A549 (cell line): ENCODE measurements at regions of chr2 and their contacts with region 1.

Region 1: GRCh38 chr2:133844214-133844892 is 276.1 kb upstream of the NCKAP5 start:
- DNase-seq: peak; percentile 62 to 64
- ATAC-seq: peak; percentile 85 to 93
- H3K4me3 ChIP-seq: no peak overlapping the region
- H3K27ac ChIP-seq: peak overlapping the region; percentile 36 to 78; a peak in 5 of 6 replicates
- H3K4me1 ChIP-seq: peaks cover 18% of the 10 kb centered on the region; the same call in 1 of the 3 replicates
- CTCF ChIP-seq: peak; percentile 90
- EP300 ChIP-seq: no peak
- POLR2A ChIP-seq: no peak
- RAD21 ChIP-seq: peak; percentile 95 to 98

Region 2: GRCh38 chr2:133171393-133172004 is 672.9 kb before region 1 on chr2:
- CTCF ChIA-PET with region 1: interaction called, 10 read pairs
- POLR2A ChIA-PET with region 1: no interaction called
- DNase-seq: peak; percentile 9 to 66
- ATAC-seq: peak; percentile 73 to 83
- H3K4me3 ChIP-seq: no peak overlapping the region
- H3K27ac ChIP-seq: no peak overlapping the region
- H3K4me1 ChIP-seq: peaks cover 17% of the 10 kb centered on the region
- CTCF ChIP-seq: peak; percentile 83
- EP300 ChIP-seq: no peak
- POLR2A ChIP-seq: no peak
- RAD21 ChIP-seq: peak; percentile 83 to 88

Region 3: GRCh38 chr2:133561045-133561852 is 283.1 kb before region 1 on chr2:
- CTCF ChIA-PET with region 1: interaction called, 20 read pairs
- POLR2A ChIA-PET with region 1: no interaction called
- DNase-seq: peak in 1 of 2 experiments; percentile 70
- ATAC-seq: peak; percentile 68 to 80; a peak in 3 of 6 replicates
- H3K4me3 ChIP-seq: no peak overlapping the region
- H3K27ac ChIP-seq: peak overlapping the region; percentile 27 to 78; a peak in 5 of 6 replicates
- H3K4me1 ChIP-seq: peaks cover 8% of the 10 kb centered on the region; the same call in 2 of the 3 replicates
- CTCF ChIP-seq: peak; percentile 81
- EP300 ChIP-seq: no peak
- POLR2A ChIP-seq: no peak
- RAD21 ChIP-seq: peak; percentile 82 to 93

Region 4: GRCh38 chr2:133765658-133766057 is 78.7 kb before region 1 on chr2:
- CTCF ChIA-PET with region 1: interaction called, 10 read pairs
- POLR2A ChIA-PET with region 1: no interaction called
- DNase-seq: peak in 1 of 2 experiments; percentile 58
- ATAC-seq: peak; percentile 68 to 82; a peak in 5 of 6 replicates
- H3K4me3 ChIP-seq: no peak overlapping the region
- H3K27ac ChIP-seq: peak overlapping the region; percentile 30 to 40; a peak in 3 of 6 replicates
- H3K4me1 ChIP-seq: peaks cover 12% of the 10 kb centered on the region
- CTCF ChIP-seq: no peak
- EP300 ChIP-seq: peak; percentile 21 to 28; a peak in 1 of 5 replicates
- POLR2A ChIP-seq: no peak
- RAD21 ChIP-seq: no peak

Region 5: GRCh38 chr2:133822517-133823225 is 21.7 kb before region 1 on chr2:
- CTCF ChIA-PET with region 1: interaction called, 13 read pairs
- POLR2A ChIA-PET with region 1: no interaction called
- DNase-seq: no peak
- ATAC-seq: no peak
- H3K4me3 ChIP-seq: no peak overlapping the region
- H3K27ac ChIP-seq: peak overlapping the region in 1 of 2 experiments; percentile 86; a peak in 4 of 6 replicates
- H3K4me1 ChIP-seq: peaks cover 27% of the 10 kb centered on the region
- CTCF ChIP-seq: no peak
- EP300 ChIP-seq: no peak
- POLR2A ChIP-seq: no peak
- RAD21 ChIP-seq: no peak